ENCODE measurements at regions of chr17 and their contacts with region 1.

Region 1: DNA sequence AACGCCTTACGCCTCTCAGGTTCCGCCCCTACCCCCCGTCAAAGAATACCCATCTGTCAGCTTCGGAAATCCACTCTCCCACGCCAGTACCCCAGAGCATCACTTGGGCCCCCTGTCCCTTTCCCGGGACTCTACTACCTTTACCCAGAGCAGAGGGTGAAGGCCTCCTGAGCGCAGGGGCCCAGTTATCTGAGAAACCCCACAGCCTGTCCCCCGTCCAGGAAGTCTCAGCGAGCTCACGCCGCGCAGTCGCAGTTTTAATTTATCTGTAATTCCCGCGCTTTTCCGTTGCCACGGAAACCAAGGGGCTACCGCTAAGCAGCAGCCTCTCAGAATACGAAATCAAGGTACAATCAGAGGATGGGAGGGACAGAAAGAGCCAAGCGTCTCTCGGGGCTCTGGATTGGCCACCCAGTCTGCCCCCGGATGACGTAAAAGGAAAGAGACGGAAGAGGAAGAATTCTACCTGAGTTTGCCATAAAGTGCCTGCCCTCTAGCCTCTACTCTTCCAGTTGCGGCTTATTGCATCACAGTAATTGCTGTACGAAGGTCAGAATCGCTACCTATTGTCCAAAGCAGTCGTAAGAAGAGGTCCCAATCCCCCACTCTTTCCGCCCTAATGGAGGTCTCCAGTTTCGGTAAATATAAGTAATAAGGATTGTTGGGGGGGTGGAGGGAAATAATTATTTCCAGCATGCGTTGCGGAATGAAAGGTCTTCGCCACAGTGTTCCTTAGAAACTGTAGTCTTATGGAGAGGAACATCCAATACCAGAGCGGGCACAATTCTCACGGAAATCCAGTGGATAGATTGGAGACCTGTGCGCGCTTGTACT is at the start of gene BRCA1:
- DNase-seq: peak; percentile 93
- H3K4me3 Mint-ChIP-seq: peak within 1 kb of the TSS; percentile 99
- H3K27ac Mint-ChIP-seq: peak within 1 kb of the TSS; percentile 99
- H3K4me1 Mint-ChIP-seq: peaks cover 24% of the 10 kb centered on the region
- H3K27me3 Mint-ChIP-seq: no peaks in the 10 kb centered on the region
- total RNA-seq, gene BRCA1: 76.1 and 79.8 TPM in 2 replicates

Region 2: DNA sequence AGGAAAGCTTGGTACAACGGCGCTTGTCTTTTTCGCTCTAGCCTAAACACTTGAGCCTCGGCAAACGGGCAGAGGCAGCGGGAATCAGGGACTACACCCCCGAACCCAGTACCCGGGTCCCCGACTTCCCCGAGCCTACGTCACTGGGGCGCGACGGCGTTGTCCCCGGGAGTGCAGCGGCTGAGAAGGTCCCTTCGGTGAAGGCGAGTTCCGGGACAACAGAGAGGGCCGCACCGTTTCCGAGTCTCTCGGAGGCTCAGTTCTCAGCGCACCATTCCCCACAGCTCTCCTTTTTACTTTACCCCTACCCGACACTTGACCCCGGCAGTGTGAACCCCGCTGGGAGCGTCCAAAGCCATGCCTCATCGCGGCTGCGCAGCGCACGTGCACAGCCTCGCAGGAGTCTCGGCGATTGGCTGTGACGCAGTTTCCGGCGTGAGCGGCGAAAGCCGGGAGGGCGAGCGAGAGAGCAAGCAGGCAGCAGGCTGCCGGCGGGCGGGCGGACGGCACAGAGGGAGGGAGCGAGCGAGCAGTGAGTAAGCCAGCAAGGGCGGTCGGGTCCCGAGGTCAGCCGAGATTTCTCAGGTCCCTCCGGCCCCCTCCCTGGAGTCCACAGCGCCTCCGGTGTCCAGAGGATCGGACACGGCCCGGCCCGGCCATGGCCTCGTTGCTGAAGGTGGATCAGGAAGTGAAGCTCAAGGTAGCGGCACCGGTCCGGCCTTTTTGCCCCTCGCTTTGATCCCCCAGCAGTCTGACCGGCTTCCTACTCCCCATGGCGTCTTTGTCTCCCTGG is 292.2 kb before region 1 on chr17 and contains the start of gene PSME3:
- intact Hi-C with region 1: loop called (anchors 2 kb)
- DNase-seq: peak; percentile 88
- H3K4me3 Mint-ChIP-seq: peak within 1 kb of the TSS; percentile 90
- H3K27ac Mint-ChIP-seq: peak within 1 kb of the TSS; percentile 93
- H3K4me1 Mint-ChIP-seq: peaks cover 23% of the 10 kb centered on the region
- H3K27me3 Mint-ChIP-seq: peaks cover 3% of the 10 kb centered on the region
- total RNA-seq, gene PSME3: 217 and 220 TPM in 2 replicates

Region 3: DNA sequence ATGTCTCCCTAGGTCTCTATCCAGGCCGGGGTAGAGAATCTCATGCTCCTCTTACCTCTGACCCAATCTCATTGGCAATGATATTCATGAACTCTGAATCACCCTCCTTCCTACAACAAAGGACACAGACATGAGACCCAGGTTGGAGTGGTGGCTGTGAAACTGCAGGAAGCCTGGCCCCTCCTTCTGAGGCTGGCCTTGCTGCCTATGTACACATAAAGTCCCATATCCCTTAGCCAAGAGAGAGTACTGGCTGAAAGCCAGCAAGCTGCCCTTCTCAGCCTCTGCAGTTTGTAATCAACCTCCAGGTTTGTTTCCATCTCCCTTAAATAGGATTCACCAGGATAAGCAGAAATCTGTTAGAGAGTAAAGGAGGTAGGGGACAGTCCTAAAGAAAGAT is 171.7 kb before region 1 on chr17:
- intact Hi-C with region 1: no loop called
- DNase-seq: no peak
- H3K4me3 Mint-ChIP-seq: no peak overlapping the region
- H3K27ac Mint-ChIP-seq: no peak overlapping the region
- H3K4me1 Mint-ChIP-seq: no peaks in the 10 kb centered on the region
- H3K27me3 Mint-ChIP-seq: no peaks in the 10 kb centered on the region

Region 4: GRCh38 chr17:42980398-42981397 is 144.7 kb before region 1 on chr17 and contains the start of gene RUNDC1:
- intact Hi-C with region 1: loop called (anchors 1 kb)
- DNase-seq: peak; percentile 87
- H3K4me3 Mint-ChIP-seq: peak within 1 kb of the TSS; percentile 100
- H3K27ac Mint-ChIP-seq: peak within 1 kb of the TSS; percentile 99
- H3K4me1 Mint-ChIP-seq: peaks cover 42% of the 10 kb centered on the region
- H3K27me3 Mint-ChIP-seq: peaks cover 2% of the 10 kb centered on the region
- total RNA-seq, gene RUNDC1: 16.9 and 18.8 TPM in 2 replicates

Region 5: DNA sequence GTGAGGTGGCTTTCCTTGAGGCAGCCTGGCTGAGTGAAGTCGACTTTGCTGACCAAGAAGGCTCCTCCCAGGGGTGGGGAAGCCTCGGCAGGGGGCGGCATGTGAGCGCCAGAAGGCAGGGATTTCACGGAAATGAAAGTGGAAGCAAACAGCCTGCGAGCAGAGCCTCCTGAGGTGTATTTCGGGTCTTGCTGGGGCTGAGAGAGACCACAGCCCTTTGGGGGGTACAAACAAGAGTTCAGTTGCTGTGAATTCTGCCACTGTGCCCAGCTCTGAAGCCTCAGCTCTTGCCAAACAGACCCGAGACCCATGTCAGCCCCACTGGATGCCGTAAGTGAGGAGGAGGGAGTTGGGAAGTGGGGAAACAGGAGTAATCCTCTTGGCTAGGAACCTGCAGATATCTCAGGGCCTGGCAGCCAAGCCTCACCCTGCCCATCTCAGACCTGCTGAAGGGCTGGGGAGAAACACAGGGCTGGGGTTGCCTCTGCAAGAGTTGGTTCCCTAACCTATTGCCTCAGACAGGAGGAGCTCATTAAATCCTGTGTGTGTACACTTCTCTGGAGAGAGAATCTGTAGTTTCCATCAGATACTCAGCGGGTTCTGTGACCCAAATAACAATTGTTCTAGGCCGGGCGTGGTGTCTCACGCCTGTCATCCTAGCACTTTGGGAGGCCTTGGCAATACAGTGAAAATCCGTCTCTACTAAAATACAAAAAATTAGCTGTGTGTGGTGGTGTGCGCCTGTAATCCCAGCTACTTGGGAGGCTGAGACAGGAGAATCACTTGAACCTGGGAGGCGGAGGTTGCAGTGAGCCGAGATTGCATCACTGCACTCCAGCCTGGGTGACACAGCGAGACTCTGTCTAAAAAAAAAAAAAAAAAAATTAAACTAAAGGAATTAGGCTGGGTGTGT is 118.5 kb before region 1 on chr17 and contains the start of gene IFI35:
- intact Hi-C with region 1: loop called (anchors 1 kb)
- DNase-seq: peak; percentile 85
- H3K4me3 Mint-ChIP-seq: peak within 1 kb of the TSS; percentile 100
- H3K27ac Mint-ChIP-seq: peak within 1 kb of the TSS; percentile 99
- H3K4me1 Mint-ChIP-seq: peaks cover 21% of the 10 kb centered on the region
- H3K27me3 Mint-ChIP-seq: no peaks in the 10 kb centered on the region
- total RNA-seq, gene IFI35: 65.8 and 67.0 TPM in 2 replicates

Region 6: GRCh38 chr17:43211480-43212402 is 86.4 kb after region 1 on chr17 and contains the start of gene TMEM106A:
- intact Hi-C with region 1: loop called (anchors 1 kb)
- DNase-seq: peak; percentile 60
- H3K4me3 Mint-ChIP-seq: peak within 1 kb of the TSS; percentile 97
- H3K27ac Mint-ChIP-seq: peak within 1 kb of the TSS; percentile 90
- H3K4me1 Mint-ChIP-seq: peaks cover 35% of the 10 kb centered on the region
- H3K27me3 Mint-ChIP-seq: no peaks in the 10 kb centered on the region
- total RNA-seq, gene TMEM106A: 18.2 and 19.1 TPM in 2 replicates